MCF 10A (cell line): ENCODE measurements at regions of chr19 and their contacts with region 1.

Region 1: GRCh38 chr19:36214386-36215275 is at the starts of genes ZNF146 and ZNF565:
- DNase-seq: peak; percentile 99
- H3K4me3 Mint-ChIP-seq: no peak within 1 kb of the TSS
- H3K27ac Mint-ChIP-seq: no peak within 1 kb of the TSS
- H3K4me1 Mint-ChIP-seq: peaks cover 6% of the 10 kb centered on the region
- H3K27me3 Mint-ChIP-seq: no peaks in the 10 kb centered on the region
- CTCF ChIP-seq: no peak
- total RNA-seq, gene ZNF146: 102 and 132 TPM in 2 replicates
- total RNA-seq, gene ZNF565: 2.9 and 3.6 TPM in 2 replicates

Region 2: DNA sequence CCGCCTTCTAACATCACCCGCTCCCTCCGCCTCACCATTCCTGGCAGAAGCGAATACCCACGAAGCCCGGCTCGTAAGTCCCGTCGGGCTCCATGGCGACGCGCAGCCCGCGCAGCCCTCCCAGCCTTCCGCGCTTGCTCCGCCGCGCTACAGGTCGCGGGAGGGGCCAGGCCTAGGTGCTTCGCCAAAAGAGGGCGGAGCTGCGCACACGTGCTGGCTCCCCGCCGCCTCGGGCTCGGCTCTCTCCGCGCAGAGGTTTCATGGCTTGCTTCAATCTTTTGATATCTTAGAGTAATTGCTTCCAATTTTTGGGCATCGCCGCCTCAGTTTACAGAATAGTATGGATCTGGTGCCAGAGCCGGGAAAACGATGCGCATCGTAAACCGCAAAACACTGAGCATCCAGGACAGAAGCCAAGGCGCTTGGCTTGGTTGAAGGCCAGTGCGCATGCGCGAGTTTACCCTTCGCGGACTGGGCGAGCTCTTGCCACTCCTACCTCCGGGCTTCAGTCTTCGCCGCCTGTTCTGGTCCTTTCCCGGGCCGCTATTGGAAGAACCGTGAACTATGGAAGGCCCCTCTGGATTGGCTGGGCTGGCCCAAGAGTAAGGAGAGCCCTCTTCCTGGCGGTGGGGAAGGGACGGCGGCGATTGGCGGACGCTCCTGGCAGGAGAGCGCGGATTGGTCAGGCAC is 99.7 kb before region 1 on chr19 and contains the start of gene POLR2I:
- CTCF ChIA-PET with region 1: no interaction called
- POLR2A ChIA-PET with region 1: interaction called, 24 read pairs
- intact Hi-C with region 1: no loop called
- DNase-seq: peak; percentile 100
- H3K4me3 Mint-ChIP-seq: peak within 1 kb of the TSS; percentile 91
- H3K27ac Mint-ChIP-seq: peak within 1 kb of the TSS; percentile 94
- H3K4me1 Mint-ChIP-seq: peaks cover 17% of the 10 kb centered on the region
- H3K27me3 Mint-ChIP-seq: no peaks in the 10 kb centered on the region
- CTCF ChIP-seq: no peak
- total RNA-seq, gene POLR2I: 112 and 126 TPM in 2 replicates

Region 3: GRCh38 chr19:36203293-36203692 is 11.3 kb before region 1 on chr19:
- CTCF ChIA-PET with region 1: interaction called, 4 read pairs
- POLR2A ChIA-PET with region 1: interaction called, 11 read pairs
- intact Hi-C with region 1: no loop called
- DNase-seq: no peak
- H3K4me3 Mint-ChIP-seq: no peak overlapping the region
- H3K27ac Mint-ChIP-seq: no peak overlapping the region
- H3K4me1 Mint-ChIP-seq: no peaks in the 10 kb centered on the region
- H3K27me3 Mint-ChIP-seq: no peaks in the 10 kb centered on the region
- CTCF ChIP-seq: no peak

Region 4: GRCh38 chr19:36378625-36379509 is 164.2 kb after region 1 on chr19 and contains the start of gene ZFP14:
- CTCF ChIA-PET with region 1: no interaction called
- POLR2A ChIA-PET with region 1: interaction called, 6 read pairs
- intact Hi-C with region 1: loop called (anchors 10 kb)
- DNase-seq: peak; percentile 96
- H3K4me3 Mint-ChIP-seq: peak within 1 kb of the TSS; percentile 94
- H3K27ac Mint-ChIP-seq: peak within 1 kb of the TSS; percentile 82
- H3K4me1 Mint-ChIP-seq: peaks cover 8% of the 10 kb centered on the region
- H3K27me3 Mint-ChIP-seq: no peaks in the 10 kb centered on the region
- CTCF ChIP-seq: peak; percentile 30
- total RNA-seq, gene ZFP14: 1.5 and 1.7 TPM in 2 replicates

Region 5: DNA sequence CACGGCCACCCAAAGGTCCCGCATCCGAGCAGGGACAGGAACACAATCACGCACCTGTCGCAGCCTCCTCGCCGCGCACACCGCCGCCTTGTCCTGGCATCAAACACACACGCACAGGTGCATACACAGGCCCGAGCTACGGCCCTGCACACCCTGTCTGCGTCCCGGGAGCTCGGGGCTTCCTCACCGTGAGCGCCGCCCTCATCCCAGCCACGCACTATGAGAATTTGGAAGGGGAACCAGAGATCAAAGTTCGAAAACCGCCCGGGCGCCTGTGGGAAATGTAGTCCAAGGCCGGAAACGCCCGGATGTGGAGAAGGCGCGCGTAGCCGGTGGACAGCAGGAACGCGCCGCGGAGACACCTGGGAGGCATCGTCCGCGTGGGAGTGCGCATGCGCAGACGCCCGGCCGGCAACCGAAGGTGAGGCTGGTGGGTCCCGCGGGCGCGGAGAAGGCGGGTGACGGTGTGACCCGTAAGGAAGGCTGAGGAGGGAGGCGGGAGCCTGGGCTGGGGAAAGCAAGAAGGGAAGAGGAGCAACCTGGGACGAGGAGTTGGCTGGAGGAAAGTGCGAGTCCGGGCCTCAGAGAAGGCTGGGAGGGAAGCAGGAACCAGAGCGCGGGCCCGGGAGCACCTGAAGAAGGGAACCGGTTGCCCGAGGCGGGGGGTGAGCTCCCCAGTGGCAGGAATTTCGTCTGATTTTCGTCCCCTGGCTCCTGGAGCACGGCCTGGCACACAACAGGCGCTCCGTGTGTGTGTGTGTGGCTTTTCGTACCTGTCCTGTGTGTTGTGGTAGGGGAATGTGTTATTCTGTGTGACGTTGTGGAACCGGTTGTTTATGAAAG is 472.8 kb after region 1 on chr19 and contains the start of gene ZNF567:
- CTCF ChIA-PET with region 1: no interaction called
- POLR2A ChIA-PET with region 1: interaction called, 5 read pairs
- intact Hi-C with region 1: loop called (anchors 10 kb)
- DNase-seq: peak; percentile 99
- H3K4me3 Mint-ChIP-seq: peak within 1 kb of the TSS; percentile 100
- H3K27ac Mint-ChIP-seq: peak within 1 kb of the TSS; percentile 98
- H3K4me1 Mint-ChIP-seq: peaks cover 13% of the 10 kb centered on the region
- H3K27me3 Mint-ChIP-seq: no peaks in the 10 kb centered on the region
- CTCF ChIP-seq: no peak
- total RNA-seq, gene ZNF567: 6.1 and 6.6 TPM in 2 replicates